ENCODE measurements at regions of chr6 and their contacts with region 1.

Region 1: DNA sequence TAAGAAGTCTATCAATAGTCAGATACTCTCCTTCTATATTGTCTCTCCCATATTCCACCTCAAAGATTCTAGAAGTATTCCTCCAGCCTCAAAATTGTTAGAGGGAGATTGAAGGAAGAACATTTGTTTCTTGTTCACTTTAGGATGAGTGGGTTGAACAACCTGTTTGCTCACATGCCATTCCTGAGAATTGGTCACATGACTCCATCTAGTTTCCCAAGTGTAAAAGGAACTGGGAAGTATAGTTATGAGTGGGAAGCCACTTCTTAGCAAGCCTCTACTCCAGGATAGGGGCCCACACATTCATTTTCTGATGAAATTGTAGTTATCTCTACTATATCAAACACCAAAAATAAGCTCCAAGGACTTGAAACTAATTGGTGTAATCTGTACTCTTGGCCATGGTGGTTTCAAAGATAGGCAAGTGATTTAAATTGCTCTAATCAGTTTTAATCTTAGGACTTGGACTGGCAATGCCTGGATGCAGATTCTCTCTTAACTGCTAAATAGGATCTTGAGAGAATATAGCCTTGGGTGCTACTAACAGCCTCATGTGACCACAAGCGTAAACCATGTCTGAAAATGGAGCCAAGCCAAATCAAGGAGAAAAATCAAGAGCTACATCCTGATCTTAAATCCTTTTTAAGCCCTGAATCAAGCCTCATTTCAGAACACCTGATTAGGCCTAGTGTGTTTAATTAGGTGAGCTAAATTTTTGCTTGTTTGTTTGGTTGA is 758.7 kb upstream of the MAN1A1 start:
- DNase-seq: no peak
- ATAC-seq: no peak

Region 2: GRCh38 chr6:119138906-119139541 is 969.2 kb before region 1 on chr6:
- intact Hi-C with region 1: loop called (anchors 5 kb)
- DNase-seq: no peak
- ATAC-seq: peak; percentile 88